ENCODE measurements at regions of chr6 and their contacts with region 1.

Region 1: GRCh38 chr6:89984926-89985750 is 90.9 kb downstream of the GJA10 start:
- DNase-seq: peak; percentile 25 to 97 (median 86)
- H3K4me3 ChIP-seq: peak overlapping the region in 45 of 59 donors; percentile 0 to 59 (median 34)
- H3K27ac ChIP-seq: peak overlapping the region in 57 of 59 donors; percentile 7 to 92 (median 77)
- H3K27me3 ChIP-seq: no peaks in the 10 kb centered on the region
- CTCF ChIP-seq: peak in 6 of 56 donors; percentile 10 to 23 (median 18)

Region 2: GRCh38 chr6:89536231-89536630 is 448.9 kb before region 1 on chr6:
- intact Hi-C with region 1: no loop called
- DNase-seq: no peak
- H3K4me3 ChIP-seq: no peak overlapping the region
- H3K27ac ChIP-seq: no peak overlapping the region
- H3K27me3 ChIP-seq: no peaks in the 10 kb centered on the region
- CTCF ChIP-seq: no peak

Region 3: GRCh38 chr6:89895276-89895874 is 89.8 kb before region 1 on chr6:
- intact Hi-C with region 1: no loop called
- DNase-seq: no peak
- H3K4me3 ChIP-seq: no peak overlapping the region
- H3K27ac ChIP-seq: no peak overlapping the region
- H3K27me3 ChIP-seq: peaks cover 0 to 26% (median 4%) of the 10 kb centered on the region in 45 donors
- CTCF ChIP-seq: no peak

Region 4: GRCh38 chr6:90025523-90026061 is 40.5 kb after region 1 on chr6:
- intact Hi-C with region 1: no loop called
- DNase-seq: no peak
- H3K4me3 ChIP-seq: no peak overlapping the region
- H3K27ac ChIP-seq: no peak overlapping the region
- H3K27me3 ChIP-seq: no peaks in the 10 kb centered on the region
- CTCF ChIP-seq: no peak

Region 5: GRCh38 chr6:90044833-90045381 is 59.8 kb after region 1 on chr6:
- intact Hi-C with region 1: loop called in 1 of 2 experiments (anchors 5 kb)
- DNase-seq: peak in 1 of 10 donors; percentile 22
- H3K4me3 ChIP-seq: no peak overlapping the region
- H3K27ac ChIP-seq: peak overlapping the region in 23 of 59 donors; percentile 4 to 65 (median 40)
- H3K27me3 ChIP-seq: no peaks in the 10 kb centered on the region
- CTCF ChIP-seq: no peak

Measured in dorsolateral prefrontal cortex (tissue), 120 donors.